ENCODE measurements at regions of chr1 and their contacts with region 1.

Region 1: GRCh38 chr1:201955009-201955728 is at the start of gene TIMM17A:
- DNase-seq: peak; percentile 94
- H3K4me3 Mint-ChIP-seq: peak within 1 kb of the TSS; percentile 98
- H3K27ac Mint-ChIP-seq: peak within 1 kb of the TSS; percentile 97
- H3K4me1 Mint-ChIP-seq: peaks cover 21% of the 10 kb centered on the region
- H3K27me3 Mint-ChIP-seq: peaks cover 3% of the 10 kb centered on the region
- total RNA-seq, gene TIMM17A: 117 and 127 TPM in 2 replicates

Region 2: DNA sequence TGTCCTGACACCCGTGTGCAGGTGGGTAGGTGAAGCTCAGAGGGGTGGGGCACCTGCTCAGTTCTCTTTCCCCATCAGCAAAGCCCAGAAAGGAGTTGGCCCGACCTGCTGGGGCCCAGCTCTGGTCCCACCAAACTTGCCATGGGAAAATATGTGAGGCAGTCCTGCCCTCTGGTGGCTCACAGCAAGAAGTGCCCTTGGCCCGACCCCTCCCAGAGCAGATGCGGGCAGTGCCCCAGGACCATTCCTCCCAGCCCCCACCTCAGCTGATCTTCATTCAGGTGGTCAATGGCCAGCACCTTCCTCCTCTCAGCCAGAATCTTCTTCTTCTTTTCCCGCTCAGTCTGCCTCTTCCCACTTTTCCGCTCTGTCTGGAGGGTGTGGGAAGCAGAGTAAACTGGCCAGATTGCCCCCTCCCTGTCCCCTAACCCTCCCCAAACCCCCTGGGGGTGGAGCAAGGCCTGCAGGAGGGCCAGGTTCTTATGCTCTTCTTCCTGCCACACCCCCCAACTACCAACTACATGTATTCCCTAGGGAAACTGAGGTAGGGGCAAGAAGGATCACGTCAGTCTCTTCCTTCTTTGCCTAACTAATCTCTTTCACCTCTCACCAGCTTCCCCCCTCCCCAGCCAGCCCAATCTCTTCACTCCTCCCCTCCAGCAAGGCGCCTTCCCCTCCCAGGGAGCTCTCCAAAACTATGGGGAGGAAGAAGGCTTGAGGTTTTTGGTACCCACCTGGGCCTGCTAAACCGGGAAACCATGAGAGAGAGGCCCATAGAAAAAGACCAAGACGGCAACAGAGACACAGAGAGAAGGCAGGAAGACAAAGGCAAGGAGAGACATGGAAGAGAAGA is 593.3 kb before region 1 on chr1:
- intact Hi-C with region 1: no loop called
- DNase-seq: no peak
- H3K4me3 Mint-ChIP-seq: no peak overlapping the region
- H3K27ac Mint-ChIP-seq: no peak overlapping the region
- H3K4me1 Mint-ChIP-seq: no peaks in the 10 kb centered on the region
- H3K27me3 Mint-ChIP-seq: peaks cover 2% of the 10 kb centered on the region

Region 3: DNA sequence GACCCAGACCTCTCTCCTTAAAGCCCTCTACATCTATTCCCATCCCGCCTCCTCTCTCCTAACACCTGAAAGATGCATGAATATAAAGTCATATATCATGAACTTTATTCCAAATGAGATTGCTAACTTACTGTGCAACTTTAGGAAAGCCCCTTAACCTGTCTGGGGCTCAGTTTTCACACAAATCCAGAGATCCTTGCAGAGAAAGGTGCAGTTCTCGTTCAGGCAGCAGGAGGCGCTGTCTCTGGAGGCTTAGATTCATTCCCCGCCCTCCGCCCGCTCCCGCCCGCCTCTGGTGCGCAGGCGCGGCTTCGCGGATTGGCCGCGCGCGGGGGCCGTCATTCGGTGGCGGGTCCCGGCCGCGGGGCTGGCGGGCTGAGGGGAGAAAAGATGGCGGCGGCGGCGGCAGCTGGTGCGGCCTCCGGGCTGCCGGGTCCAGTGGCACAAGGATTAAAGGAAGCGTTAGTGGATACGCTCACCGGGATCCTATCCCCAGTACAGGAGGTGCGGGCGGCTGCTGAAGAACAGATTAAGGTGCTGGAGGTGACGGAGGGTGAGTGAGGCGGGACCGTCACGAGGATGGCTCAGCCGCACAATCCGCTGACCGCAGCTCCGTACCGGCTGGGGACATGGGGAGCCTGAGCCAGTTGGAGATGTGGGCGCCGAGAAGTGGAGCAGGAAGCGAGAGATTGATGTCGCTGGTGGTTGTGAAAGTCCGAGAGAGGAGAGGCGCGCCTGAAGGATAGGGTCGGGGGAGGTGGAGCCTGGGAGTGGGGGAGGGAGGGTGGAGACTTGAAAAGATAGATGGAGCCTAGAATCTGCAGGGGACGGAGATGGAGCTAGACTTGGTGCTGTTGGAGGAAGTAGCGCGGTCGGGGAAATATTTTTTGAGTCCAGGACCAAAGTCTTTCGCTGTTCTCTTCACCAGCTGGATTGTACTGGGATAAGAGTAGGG is 126.1 kb before region 1 on chr1 and contains the start of gene IPO9:
- intact Hi-C with region 1: loop called (anchors 1 kb)
- DNase-seq: peak; percentile 93
- H3K4me3 Mint-ChIP-seq: peak within 1 kb of the TSS; percentile 96
- H3K27ac Mint-ChIP-seq: peak within 1 kb of the TSS; percentile 88
- H3K4me1 Mint-ChIP-seq: peaks cover 43% of the 10 kb centered on the region
- H3K27me3 Mint-ChIP-seq: peaks cover 3% of the 10 kb centered on the region
- total RNA-seq, gene IPO9: 58.5 and 61.6 TPM in 2 replicates

Region 4: DNA sequence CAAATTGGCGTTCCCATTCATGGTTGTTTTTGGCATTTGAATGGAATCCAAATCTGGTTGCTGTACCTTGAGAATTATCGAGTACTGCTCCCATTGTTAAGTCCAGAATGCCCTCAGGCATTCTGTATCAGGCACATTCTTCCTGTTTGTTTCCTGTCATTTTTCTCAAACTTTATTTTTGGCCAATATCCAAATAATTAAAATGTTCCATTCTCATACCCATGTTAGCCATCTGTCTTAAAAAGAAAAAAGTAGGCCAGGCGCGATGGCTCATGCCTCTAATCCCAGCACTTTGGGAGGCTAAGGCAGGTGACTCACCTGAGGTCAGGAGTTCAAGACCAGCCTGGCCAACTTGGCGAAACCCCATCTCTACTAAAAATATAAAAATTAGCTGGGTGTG is 95.7 kb before region 1 on chr1:
- intact Hi-C with region 1: no loop called
- DNase-seq: no peak
- H3K4me3 Mint-ChIP-seq: no peak overlapping the region
- H3K27ac Mint-ChIP-seq: no peak overlapping the region
- H3K4me1 Mint-ChIP-seq: no peaks in the 10 kb centered on the region
- H3K27me3 Mint-ChIP-seq: no peaks in the 10 kb centered on the region

Region 5: DNA sequence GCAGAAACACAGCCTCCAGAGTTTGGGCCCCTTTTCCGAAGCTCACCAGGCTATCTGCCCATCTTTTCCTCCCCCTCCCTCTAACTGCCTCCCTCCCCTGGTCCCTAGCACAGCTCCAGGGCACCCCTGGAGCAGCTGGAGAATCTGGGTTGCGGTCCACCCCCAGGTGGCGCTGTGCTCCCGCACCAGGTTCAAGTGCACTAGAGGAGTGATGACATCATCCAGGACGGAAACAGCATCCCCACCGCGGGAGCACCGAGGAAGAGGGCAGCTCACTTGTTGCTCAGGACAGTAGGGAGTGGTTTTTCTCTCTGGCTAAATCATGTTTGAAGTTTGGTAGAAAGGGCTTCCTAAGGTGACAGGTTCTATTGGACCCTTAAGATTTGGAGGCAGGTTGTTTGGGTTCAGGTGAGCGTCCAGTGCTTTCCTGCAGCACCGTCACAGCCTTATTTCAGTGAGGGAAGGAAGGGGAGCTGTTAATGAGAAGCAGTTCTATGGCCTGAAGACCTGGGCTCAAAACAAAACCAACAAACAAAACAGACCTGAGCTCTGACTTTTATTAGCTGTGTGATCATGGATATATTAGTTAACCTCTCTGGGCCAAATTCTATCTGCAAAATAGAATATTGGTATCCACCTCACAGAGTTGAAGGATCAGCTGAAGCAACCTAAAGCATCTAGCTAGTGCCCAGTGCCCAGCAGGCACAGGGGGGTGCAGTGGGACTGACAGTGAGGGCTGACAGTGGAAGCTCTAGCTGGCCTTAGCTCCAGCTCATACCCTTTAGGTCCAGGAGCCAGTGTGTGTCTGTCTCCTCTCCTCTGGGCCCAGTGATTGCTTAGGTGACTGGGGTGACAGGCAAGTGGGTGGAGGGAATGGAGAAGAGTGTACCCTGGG is 59.0 kb before region 1 on chr1:
- intact Hi-C with region 1: loop called (anchors 1 kb)
- DNase-seq: peak; percentile 80
- H3K4me3 Mint-ChIP-seq: peak overlapping the region; percentile 27
- H3K27ac Mint-ChIP-seq: peak overlapping the region; percentile 41
- H3K4me1 Mint-ChIP-seq: peaks cover 10% of the 10 kb centered on the region
- H3K27me3 Mint-ChIP-seq: peaks cover 8% of the 10 kb centered on the region

Region 6: GRCh38 chr1:201970334-201971159 is 15.4 kb after region 1 on chr1:
- intact Hi-C with region 1: no loop called
- DNase-seq: no peak
- H3K4me3 Mint-ChIP-seq: no peak overlapping the region
- H3K27ac Mint-ChIP-seq: no peak overlapping the region
- H3K4me1 Mint-ChIP-seq: peaks cover 4% of the 10 kb centered on the region
- H3K27me3 Mint-ChIP-seq: peaks cover 5% of the 10 kb centered on the region

Region 7: GRCh38 chr1:201982623-201983379 is 27.6 kb after region 1 on chr1 and contains the start of gene RNPEP:
- intact Hi-C with region 1: loop called (anchors 1 kb)
- DNase-seq: peak; percentile 38
- H3K4me3 Mint-ChIP-seq: peak within 1 kb of the TSS; percentile 98
- H3K27ac Mint-ChIP-seq: peak within 1 kb of the TSS; percentile 90
- H3K4me1 Mint-ChIP-seq: peaks cover 25% of the 10 kb centered on the region
- H3K27me3 Mint-ChIP-seq: peaks cover 6% of the 10 kb centered on the region
- total RNA-seq, gene RNPEP: 31.1 and 34.2 TPM in 2 replicates

Region 8: DNA sequence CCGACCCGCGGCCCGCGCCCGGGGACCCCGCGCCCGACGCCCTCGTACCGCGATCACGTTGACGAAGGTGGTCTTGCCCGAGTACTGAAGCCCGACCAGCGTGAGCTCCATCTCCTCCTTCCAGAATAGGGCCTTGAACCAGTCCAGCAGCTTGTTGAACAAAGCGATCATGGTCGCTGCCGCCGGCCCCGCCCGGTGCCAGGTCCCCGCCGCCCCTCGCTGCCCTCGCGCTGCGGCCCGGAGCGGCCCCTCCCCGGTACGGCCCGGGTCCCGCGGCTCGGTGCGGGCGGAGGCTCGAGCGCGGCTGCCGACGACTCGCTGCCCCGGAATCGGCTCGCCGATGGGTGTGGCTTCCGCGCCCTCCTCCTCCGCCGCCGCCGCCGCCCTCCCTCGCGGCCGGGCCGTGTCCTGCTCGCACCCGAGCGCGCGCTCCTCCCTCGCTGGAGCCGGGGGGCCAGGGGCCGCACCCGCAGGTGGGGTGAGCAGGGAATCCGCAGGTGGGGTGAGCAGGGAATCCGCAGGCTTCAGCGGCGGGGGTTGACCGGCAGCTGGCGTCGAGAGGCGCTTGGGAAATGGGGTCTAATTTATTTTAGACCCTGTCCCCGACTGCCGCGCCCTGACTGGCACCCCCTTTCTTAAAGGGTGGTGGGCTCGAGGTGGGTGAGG is 189.4 kb after region 1 on chr1 and contains the start of gene ARL8A:
- intact Hi-C with region 1: loop called (anchors 1 kb)
- DNase-seq: peak; percentile 71
- H3K4me3 Mint-ChIP-seq: peak within 1 kb of the TSS; percentile 88
- H3K27ac Mint-ChIP-seq: peak within 1 kb of the TSS; percentile 91
- H3K4me1 Mint-ChIP-seq: peaks cover 26% of the 10 kb centered on the region
- H3K27me3 Mint-ChIP-seq: no peaks in the 10 kb centered on the region
- total RNA-seq, gene ARL8A: 56.6 and 69.0 TPM in 2 replicates

Region 9: GRCh38 chr1:202160377-202160940 is 205.3 kb after region 1 on chr1 and contains the start of gene PTPN7:
- intact Hi-C with region 1: loop called (anchors 1 kb)
- DNase-seq: peak; percentile 59
- H3K4me3 Mint-ChIP-seq: peak within 1 kb of the TSS; percentile 98
- H3K27ac Mint-ChIP-seq: peak within 1 kb of the TSS; percentile 94
- H3K4me1 Mint-ChIP-seq: peaks cover 77% of the 10 kb centered on the region
- H3K27me3 Mint-ChIP-seq: no peaks in the 10 kb centered on the region
- total RNA-seq, gene PTPN7: 584 and 597 TPM in 2 replicates

Measured in activated T-helper 1 cell treated with anti-CD3 and anti-CD28 coated beads, Interleukin-12 subunit alpha, Interleukin-12 subunit beta, Interleukin-2, Interleukin-4 antibody, amounts not matched to agents 30 ng/mL and 10 ng/mL and 1 ng/mL, durations not matched to agents 14 hours and 24 hours and 36 hours (primary cell).